Right ventricle myocardium inferior (tissue), 1 donor: ENCODE measurements at regions of chr5 and their contacts with region 1.

Region 1: GRCh38 chr5:127856292-127856691 is 153.1 kb downstream of the CCDC192 start:
- DNase-seq: no peak
- ATAC-seq: no peak

Region 2: DNA sequence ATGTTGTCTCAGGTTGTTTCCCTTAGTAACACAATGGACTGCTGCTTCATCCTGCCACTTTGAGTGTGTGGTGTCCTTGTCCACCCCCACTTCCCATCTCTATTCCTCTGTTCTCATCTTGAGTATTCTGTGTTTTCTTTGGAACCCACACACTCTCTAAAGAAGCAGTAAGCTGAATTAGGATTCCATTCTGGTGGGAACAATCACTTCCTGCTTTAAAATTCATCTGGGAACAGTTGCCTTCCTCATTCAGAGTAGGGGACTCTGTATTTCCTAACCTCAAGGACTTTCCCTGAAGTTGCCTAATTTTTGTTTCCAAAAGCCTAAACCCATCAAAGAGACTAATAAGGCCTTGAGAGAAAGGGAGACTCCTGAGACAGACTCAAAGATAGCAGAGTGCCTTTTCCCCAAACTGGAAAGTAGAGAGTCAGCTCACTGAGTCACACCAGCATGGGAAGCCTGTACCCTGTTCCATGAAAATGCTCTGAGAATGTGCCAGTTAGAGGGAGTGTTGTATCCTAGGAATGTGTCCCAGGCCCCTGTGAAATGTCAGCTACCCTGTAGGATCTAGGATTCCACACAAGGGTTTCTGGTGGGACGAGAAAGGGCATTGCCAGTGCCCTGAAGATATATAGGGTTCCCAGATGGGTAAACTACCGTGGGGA is 89.5 kb before region 1 on chr5:
- intact Hi-C with region 1: loop called (anchors 10 kb)
- DNase-seq: no peak
- ATAC-seq: peak; percentile 20